Calu3 (cell line): ENCODE measurements at regions of chr6 and their contacts with region 1.

Region 1: DNA sequence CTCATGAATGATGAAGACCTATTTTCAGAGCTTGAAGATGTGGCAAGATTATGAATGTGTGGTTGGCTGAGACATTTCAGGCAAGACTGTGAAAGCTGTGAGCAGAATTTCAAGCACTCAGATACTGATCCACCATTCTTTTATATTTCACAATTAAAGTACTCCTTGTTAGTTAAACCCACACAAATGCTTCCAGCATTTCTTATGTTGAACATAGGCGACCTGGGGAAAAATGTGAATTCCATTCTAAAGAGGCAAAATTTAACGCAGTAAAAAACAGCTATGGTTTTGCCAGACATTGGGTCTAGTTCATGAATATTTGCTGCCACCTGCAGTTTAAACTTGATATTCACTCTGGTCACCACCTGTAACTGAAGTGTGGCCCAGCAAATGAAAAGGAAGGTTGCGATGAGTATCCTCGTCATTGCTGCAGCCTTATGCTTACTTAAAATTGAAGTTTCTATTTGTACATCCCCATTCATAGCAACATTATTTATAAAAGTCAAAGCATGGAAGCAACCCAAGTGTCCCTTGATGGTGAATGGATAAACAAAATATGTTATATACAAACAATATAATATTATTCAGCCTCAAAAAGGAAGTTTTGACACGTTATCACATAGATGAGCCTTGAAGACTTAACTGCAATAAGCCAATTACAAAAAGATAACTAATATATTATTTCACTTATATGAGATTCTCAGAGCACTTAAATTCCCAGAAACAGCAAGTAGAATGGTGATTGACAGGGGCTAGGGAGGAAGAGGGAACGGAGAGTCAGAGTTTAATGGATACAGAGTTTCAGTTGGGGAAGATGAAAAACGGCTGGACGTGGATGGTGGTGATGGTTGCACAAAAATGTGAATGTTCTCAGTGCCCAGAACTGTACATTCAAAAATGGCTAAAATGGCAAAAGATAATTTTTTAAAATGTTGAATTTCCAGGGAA is 32.4 kb upstream of the FAM184A start:
- DNase-seq: peak; percentile 57
- H3K4me3 Mint-ChIP-seq: no peak overlapping the region
- H3K27ac Mint-ChIP-seq: no peak overlapping the region
- H3K4me1 Mint-ChIP-seq: no peaks in the 10 kb centered on the region
- H3K27me3 Mint-ChIP-seq: no peaks in the 10 kb centered on the region
- CTCF ChIP-seq: peak; percentile 38

Region 2: DNA sequence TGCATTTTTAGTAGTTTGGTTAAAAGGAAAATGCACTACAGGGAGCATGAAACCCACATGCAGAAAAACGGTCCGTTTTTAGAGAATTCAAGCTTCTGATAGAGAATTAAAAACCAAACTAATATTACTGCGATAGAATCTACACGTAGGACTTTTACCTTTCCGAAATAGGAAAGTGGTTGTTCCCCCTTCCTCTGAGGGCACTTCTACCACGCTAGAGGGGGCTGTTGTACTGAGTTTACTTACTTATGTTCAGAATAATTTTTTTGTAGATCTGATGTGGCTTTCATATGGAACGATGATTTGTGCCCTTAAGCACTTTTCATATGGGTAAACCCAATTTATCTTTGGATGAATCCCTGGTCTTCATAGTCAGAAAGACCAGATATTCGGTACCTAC is 827.1 kb before region 1 on chr6:
- CTCF ChIA-PET with region 1: no interaction called
- intact Hi-C with region 1: loop called (anchors 2 kb)
- DNase-seq: peak; percentile 59
- H3K4me3 Mint-ChIP-seq: no peak overlapping the region
- H3K27ac Mint-ChIP-seq: no peak overlapping the region
- H3K4me1 Mint-ChIP-seq: peaks cover 8% of the 10 kb centered on the region
- H3K27me3 Mint-ChIP-seq: no peaks in the 10 kb centered on the region
- CTCF ChIP-seq: peak; percentile 61

Region 3: DNA sequence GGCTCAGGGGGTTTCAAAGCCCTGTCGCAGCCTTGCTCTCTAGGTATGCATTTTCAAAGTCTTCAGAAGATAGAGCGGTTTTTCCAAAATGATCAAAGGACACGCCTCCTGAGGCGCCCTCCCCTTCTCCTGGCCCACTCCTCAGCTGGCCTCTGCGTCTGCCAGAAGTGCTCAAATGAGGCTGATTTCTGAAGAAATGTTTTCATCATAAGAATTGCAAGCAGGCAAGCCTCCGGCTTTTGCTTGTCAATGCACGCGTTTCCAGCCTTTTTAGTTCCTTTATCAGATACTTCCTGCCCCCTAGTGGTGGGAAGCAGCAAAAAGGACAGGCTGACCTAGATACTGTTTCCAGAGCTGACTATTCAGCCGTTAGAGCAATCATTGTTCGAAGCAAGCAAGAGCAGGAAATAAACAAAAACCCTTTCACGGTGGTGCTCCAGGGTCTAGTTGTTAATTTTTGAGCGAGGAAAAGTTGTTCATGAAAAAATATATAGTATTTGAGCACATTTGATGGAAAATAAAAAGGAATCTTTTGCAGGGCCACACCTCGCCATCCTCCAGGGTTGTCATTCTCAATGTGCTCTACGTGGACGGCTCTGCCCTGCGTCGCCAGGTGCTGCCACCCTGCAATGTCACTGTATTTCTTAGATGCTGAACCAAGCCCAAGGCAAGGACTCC is 310.3 kb before region 1 on chr6:
- CTCF ChIA-PET with region 1: no interaction called
- intact Hi-C with region 1: loop called (anchors 10 kb)
- DNase-seq: peak; percentile 81
- H3K4me3 Mint-ChIP-seq: peak overlapping the region; percentile 41
- H3K27ac Mint-ChIP-seq: peak overlapping the region; percentile 54
- H3K4me1 Mint-ChIP-seq: peaks cover 17% of the 10 kb centered on the region
- H3K27me3 Mint-ChIP-seq: no peaks in the 10 kb centered on the region
- CTCF ChIP-seq: peak; percentile 75

Region 4: GRCh38 chr6:118963003-118963402 is 147.9 kb before region 1 on chr6:
- CTCF ChIA-PET with region 1: interaction called, 11 read pairs
- intact Hi-C with region 1: loop called (anchors 1 kb)
- DNase-seq: no peak
- H3K4me3 Mint-ChIP-seq: no peak overlapping the region
- H3K27ac Mint-ChIP-seq: no peak overlapping the region
- H3K4me1 Mint-ChIP-seq: peaks cover 9% of the 10 kb centered on the region
- H3K27me3 Mint-ChIP-seq: no peaks in the 10 kb centered on the region
- CTCF ChIP-seq: no peak

Region 5: DNA sequence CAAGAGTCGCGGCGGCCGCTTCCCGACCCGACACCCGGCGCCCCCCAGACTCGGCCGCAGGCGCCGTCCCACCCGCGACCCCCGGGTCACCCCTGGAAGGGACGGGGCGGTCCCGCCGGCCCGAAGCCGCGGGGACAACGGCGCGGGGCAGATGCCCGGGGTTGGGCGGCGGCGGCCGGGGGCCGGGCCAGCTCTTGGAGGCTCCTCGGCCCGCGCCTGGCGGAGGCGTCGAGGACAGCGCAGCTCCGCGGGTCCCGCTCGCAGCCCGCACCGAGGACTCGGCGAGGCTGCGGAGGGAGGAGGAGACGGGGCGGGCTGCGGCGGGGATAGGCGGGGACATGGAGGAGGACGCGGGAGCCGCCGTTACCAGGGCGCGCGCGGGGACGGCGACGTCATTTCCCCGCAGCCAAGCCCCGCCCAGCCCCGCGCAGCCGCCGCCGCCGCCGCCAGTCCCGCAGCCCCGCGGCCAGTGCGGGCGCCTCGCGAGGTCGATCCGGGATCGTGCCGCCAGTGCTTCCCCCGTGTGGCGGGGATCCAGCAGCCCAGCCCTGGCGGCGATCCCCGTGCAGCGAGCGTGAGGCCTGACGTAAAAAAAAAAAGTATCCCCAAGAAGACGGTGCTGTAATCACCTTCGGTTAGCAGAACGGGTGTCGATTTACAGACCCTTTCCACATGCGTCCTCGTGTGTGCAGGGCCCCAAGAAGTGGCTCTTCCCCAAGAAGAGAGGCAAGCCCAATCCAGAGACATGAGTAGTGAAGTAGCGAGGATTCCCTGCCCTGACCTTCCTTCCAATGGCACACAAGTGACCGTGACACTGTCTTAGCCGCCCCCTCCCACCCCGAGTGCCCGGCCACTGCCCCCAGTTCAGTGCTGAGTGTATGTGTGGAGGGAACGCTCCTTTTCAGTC is 32.2 kb before region 1 on chr6 and contains the start of gene FAM184A:
- CTCF ChIA-PET with region 1: interaction called, 3 read pairs
- intact Hi-C with region 1: loop called (anchors 5 kb)
- DNase-seq: peak; percentile 82
- H3K4me3 Mint-ChIP-seq: peak within 1 kb of the TSS; percentile 90
- H3K27ac Mint-ChIP-seq: peak within 1 kb of the TSS; percentile 80
- H3K4me1 Mint-ChIP-seq: peaks cover 18% of the 10 kb centered on the region
- H3K27me3 Mint-ChIP-seq: no peaks in the 10 kb centered on the region
- CTCF ChIP-seq: no peak
- total RNA-seq, gene FAM184A: 8.2 and 8.6 TPM in 2 replicates

Region 6: GRCh38 chr6:119226089-119226488 is 115.2 kb after region 1 on chr6:
- CTCF ChIA-PET with region 1: no interaction called
- intact Hi-C with region 1: no loop called
- DNase-seq: no peak
- H3K4me3 Mint-ChIP-seq: no peak overlapping the region
- H3K27ac Mint-ChIP-seq: no peak overlapping the region
- H3K4me1 Mint-ChIP-seq: no peaks in the 10 kb centered on the region
- H3K27me3 Mint-ChIP-seq: no peaks in the 10 kb centered on the region
- CTCF ChIP-seq: no peak

Region 7: DNA sequence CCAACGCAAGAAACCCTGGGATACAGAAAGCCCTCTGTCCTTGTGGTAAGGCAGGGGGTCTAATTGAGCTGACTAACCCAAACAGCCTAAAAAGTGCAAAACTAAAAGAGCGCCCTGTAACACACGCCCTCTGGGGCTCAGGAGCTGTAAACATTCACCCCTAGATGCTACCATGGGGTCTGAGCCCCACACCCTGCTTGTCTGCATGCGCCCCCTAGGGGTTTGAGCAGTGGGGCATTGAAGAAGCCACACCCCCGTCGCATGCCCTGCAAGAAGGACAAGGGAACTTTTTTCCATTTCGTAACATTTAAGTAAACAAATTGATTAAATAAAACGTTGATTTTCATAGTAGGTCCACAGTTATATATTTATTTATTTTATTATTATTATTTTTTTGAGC is 855.6 kb after region 1 on chr6:
- CTCF ChIA-PET with region 1: no interaction called
- intact Hi-C with region 1: no loop called
- DNase-seq: no peak
- H3K4me3 Mint-ChIP-seq: no peak overlapping the region
- H3K27ac Mint-ChIP-seq: no peak overlapping the region
- H3K4me1 Mint-ChIP-seq: no peaks in the 10 kb centered on the region
- H3K27me3 Mint-ChIP-seq: no peaks in the 10 kb centered on the region
- CTCF ChIP-seq: no peak